PC-3 (cell line): ENCODE measurements at regions of chr4 and their contacts with region 1.

Region 1: GRCh38 chr4:112145820-112146813 is 863 bp downstream of the FAM241A start:
- DNase-seq: peak; percentile 38
- ATAC-seq: peak; percentile 65
- H3K4me3 ChIP-seq: peak overlapping the region; percentile 99
- H3K27ac ChIP-seq: peak overlapping the region; percentile 43; the same call in 1 of the 2 replicates
- H3K4me1 ChIP-seq: peaks cover 9% of the 10 kb centered on the region
- H3K27me3 ChIP-seq: no peaks in the 10 kb centered on the region
- CTCF ChIP-seq: no peak

Region 2: DNA sequence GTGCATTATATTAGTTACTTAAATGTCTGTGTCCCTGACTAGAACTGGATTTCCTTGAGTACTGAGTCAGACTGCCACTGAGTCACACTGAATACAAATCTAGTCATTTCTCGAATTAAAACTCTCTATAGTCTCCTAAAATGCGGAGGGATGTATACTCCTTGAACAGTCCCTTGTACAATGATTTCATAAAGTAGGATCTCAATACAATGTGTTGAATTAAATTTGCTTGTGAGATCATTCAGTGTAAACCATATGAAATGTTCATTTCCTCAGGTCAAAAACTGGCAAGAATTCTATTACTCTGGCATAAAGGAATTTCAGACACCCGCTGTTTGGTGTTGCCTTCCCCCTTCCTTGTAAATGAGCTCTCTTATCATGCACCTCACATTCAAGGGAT is 18.3 kb before region 1 on chr4:
- CTCF ChIA-PET with region 1: no interaction called
- POLR2A ChIA-PET with region 1: no interaction called
- intact Hi-C with region 1: loop called (anchors 2 kb)
- DNase-seq: peak; percentile 59
- ATAC-seq: peak; percentile 76
- H3K4me3 ChIP-seq: peak overlapping the region; percentile 13; the same call in 1 of the 2 replicates
- H3K27ac ChIP-seq: peak overlapping the region; percentile 6; the same call in 1 of the 2 replicates
- H3K4me1 ChIP-seq: peaks cover 28% of the 10 kb centered on the region
- H3K27me3 ChIP-seq: no peaks in the 10 kb centered on the region
- CTCF ChIP-seq: no peak

Region 3: GRCh38 chr4:112253382-112254000 is 107.4 kb after region 1 on chr4:
- CTCF ChIA-PET with region 1: no interaction called
- POLR2A ChIA-PET with region 1: no interaction called
- intact Hi-C with region 1: no loop called
- DNase-seq: no peak
- ATAC-seq: no peak
- H3K4me3 ChIP-seq: no peak overlapping the region
- H3K27ac ChIP-seq: no peak overlapping the region
- H3K4me1 ChIP-seq: no peaks in the 10 kb centered on the region
- H3K27me3 ChIP-seq: no peaks in the 10 kb centered on the region
- CTCF ChIP-seq: no peak